Mammary epithelial cell (primary cell): ENCODE measurements at regions of chr18 and their contacts with region 1.

Region 1: GRCh38 chr18:34592961-34593382 is 117.1 kb upstream of the DTNA start:
- DNase-seq: peak; percentile 76
- H3K4me3 ChIP-seq: peak overlapping the region in 2 of 3 experiments; percentile 9 to 28
- H3K27ac ChIP-seq: no peak overlapping the region
- H3K4me1 ChIP-seq: no peaks in the 10 kb centered on the region
- H3K27me3 ChIP-seq: no peaks in the 10 kb centered on the region
- CTCF ChIP-seq: no peak

Region 2: DNA sequence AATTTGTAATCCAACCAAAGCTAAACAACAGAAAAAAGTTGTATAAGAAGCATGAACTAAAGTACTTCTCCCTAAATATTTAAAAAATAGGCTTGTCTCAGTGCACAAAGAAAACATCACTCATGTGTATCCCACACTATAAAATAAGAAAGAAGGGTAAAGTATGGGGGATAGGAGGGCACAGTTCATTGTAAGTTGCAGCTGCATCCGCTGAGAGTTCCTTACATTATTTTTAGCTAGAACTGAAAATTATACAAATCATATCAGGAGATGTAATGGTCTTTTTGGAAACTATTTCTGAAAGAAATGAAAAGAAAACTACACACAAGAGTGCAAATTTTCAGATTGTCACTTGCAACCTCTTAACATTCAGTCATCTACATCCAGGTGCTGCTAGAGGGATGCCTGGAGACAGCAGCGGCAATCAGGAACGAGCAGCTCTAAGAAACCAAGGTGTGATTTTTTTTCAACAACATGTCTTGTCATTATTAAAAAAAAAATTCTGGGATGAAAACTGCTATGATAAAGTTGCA is 741.4 kb before region 1 on chr18:
- CTCF ChIA-PET with region 1: no interaction called
- dilution Hi-C with region 1: no loop called
- in situ Hi-C with region 1: no loop called
- intact Hi-C with region 1: no loop called
- DNase-seq: no peak
- H3K4me3 ChIP-seq: no peak overlapping the region
- H3K27ac ChIP-seq: no peak overlapping the region
- H3K4me1 ChIP-seq: no peaks in the 10 kb centered on the region
- H3K27me3 ChIP-seq: peaks cover 2% of the 10 kb centered on the region
- CTCF ChIP-seq: no peak

Region 3: DNA sequence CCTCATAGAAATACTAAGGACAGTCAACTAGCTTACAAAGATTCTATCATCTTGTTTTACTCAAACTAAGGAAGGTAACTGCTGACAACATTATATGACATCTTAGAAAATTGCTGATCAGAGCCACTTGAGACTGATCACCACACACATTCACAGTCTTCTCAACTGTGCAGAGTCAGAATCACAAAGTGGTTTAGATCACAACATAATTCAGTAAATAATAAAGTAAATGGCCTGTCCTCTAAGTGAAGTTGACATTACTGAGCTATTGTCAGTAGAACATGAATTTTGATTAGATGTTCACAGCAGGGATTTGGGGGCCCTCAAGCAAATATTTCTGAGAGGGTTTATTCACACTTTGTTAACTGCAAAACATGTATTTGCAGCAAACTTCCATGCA is 396.7 kb before region 1 on chr18:
- CTCF ChIA-PET with region 1: no interaction called
- dilution Hi-C with region 1: no loop called
- in situ Hi-C with region 1: no loop called
- intact Hi-C with region 1: no loop called
- DNase-seq: no peak
- H3K4me3 ChIP-seq: no peak overlapping the region
- H3K27ac ChIP-seq: no peak overlapping the region
- H3K4me1 ChIP-seq: no peaks in the 10 kb centered on the region
- H3K27me3 ChIP-seq: no peaks in the 10 kb centered on the region
- CTCF ChIP-seq: no peak

Region 4: DNA sequence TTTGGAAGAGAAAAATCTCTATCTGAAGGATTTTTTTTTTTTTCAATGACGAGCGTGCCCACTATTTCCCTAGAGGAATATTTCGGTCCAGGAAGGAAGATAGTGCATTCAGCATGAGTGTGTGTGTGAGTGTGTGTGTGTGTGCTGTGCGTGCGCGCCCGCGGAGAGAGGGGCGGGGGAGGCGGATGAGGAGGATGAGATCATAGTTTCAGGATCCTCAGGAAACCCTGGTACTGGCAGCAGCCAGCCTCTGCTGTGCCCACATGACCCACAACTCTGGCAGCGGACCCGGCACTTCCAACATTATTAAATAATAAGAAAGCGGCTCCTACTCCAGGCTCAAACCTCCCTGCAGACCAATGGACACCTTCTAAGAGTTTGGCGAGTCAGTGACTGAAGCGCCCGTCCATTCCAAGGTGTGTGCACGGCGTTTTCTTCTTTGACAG is 99.8 kb before region 1 on chr18:
- CTCF ChIA-PET with region 1: no interaction called
- dilution Hi-C with region 1: no loop called
- in situ Hi-C with region 1: no loop called
- intact Hi-C with region 1: loop called (anchors 10 kb)
- DNase-seq: peak; percentile 86
- H3K4me3 ChIP-seq: peak overlapping the region; percentile 45 to 63 (median 46)
- H3K27ac ChIP-seq: peak overlapping the region; percentile 15
- H3K4me1 ChIP-seq: no peaks in the 10 kb centered on the region
- H3K27me3 ChIP-seq: peaks cover 5% of the 10 kb centered on the region
- CTCF ChIP-seq: no peak

Region 5: DNA sequence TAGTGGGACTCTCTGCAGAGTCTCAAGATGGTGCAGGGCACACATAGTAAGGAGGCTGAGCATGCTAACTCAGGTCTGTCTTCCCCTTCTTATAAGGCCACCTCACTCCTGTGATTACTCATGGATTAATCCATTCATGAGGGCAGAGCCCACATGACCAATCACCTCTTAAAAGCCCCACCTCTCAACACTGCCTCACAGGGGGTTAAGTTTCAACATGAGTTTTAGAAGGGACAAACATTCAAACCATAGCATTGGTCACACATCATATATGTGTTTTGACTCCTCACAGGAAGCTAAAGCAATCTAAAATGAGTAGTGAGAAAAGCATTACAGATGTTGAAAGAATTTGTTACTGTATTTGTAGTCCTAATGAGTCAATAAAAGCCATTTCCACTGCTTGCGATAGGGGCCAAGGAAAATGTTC is 174.6 kb after region 1 on chr18:
- CTCF ChIA-PET with region 1: no interaction called
- dilution Hi-C with region 1: no loop called
- in situ Hi-C with region 1: no loop called
- intact Hi-C with region 1: loop called (anchors 5 kb)
- DNase-seq: peak; percentile 93
- H3K4me3 ChIP-seq: no peak overlapping the region
- H3K27ac ChIP-seq: peak overlapping the region; percentile 33
- H3K4me1 ChIP-seq: peaks cover 16% of the 10 kb centered on the region
- H3K27me3 ChIP-seq: no peaks in the 10 kb centered on the region
- CTCF ChIP-seq: no peak

Region 6: GRCh38 chr18:34870555-34871310 is 277.8 kb after region 1 on chr18:
- CTCF ChIA-PET with region 1: no interaction called
- dilution Hi-C with region 1: no loop called
- in situ Hi-C with region 1: no loop called
- intact Hi-C with region 1: no loop called
- DNase-seq: no peak
- H3K4me3 ChIP-seq: no peak overlapping the region
- H3K27ac ChIP-seq: no peak overlapping the region
- H3K4me1 ChIP-seq: no peaks in the 10 kb centered on the region
- H3K27me3 ChIP-seq: no peaks in the 10 kb centered on the region
- CTCF ChIP-seq: no peak

Region 7: GRCh38 chr18:34880882-34881834 is 288.2 kb after region 1 on chr18:
- CTCF ChIA-PET with region 1: no interaction called
- dilution Hi-C with region 1: no loop called
- in situ Hi-C with region 1: no loop called
- intact Hi-C with region 1: no loop called
- DNase-seq: no peak
- H3K4me3 ChIP-seq: no peak overlapping the region
- H3K27ac ChIP-seq: no peak overlapping the region
- H3K4me1 ChIP-seq: no peaks in the 10 kb centered on the region
- H3K27me3 ChIP-seq: peaks cover 2% of the 10 kb centered on the region
- CTCF ChIP-seq: peak in 1 of 2 donors; percentile 30